B cell (primary cell): ENCODE measurements at regions of chr7 and their contacts with region 1.

Region 1: DNA sequence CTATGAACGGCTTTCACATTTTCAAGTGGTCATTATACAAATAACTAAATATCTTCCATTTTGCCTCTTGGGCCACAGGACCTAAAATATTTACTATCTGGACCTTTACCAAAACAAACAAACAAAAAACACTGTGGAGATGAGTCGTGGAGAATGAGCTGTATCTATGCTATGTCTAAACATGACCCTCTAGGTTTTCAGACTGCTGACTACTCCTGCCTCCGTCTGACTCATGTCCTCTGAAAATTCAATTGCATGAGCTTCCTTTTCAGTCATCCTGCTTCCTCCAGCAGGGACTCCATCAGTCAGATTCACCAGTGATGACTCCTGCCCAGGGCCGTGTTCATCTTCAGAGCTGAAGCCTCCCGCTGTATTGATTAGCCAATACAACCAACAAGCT is 96.8 kb downstream of the COL28A1 start:
- DNase-seq: no peak
- ATAC-seq: no peak
- H3K4me3 ChIP-seq: no peak overlapping the region
- H3K4me3 Mint-ChIP-seq: no peak overlapping the region
- H3K27ac ChIP-seq: no peak overlapping the region
- H3K27ac Mint-ChIP-seq: no peak overlapping the region
- H3K4me1 ChIP-seq: no peaks in the 10 kb centered on the region
- H3K4me1 Mint-ChIP-seq: no peaks in the 10 kb centered on the region
- H3K27me3 ChIP-seq: no peaks in the 10 kb centered on the region
- H3K27me3 Mint-ChIP-seq: peaks cover 11% of the 10 kb centered on the region
- CTCF ChIP-seq: no peak

Region 2: GRCh38 chr7:7489546-7489945 is 50.7 kb after region 1 on chr7:
- CTCF ChIA-PET with region 1: no interaction called
- POLR2A ChIA-PET with region 1: no interaction called
- intact Hi-C with region 1: loop called (anchors 10 kb)
- DNase-seq: no peak
- ATAC-seq: no peak
- H3K4me3 ChIP-seq: no peak overlapping the region
- H3K4me3 Mint-ChIP-seq: peak overlapping the region; percentile 53
- H3K27ac ChIP-seq: no peak overlapping the region
- H3K27ac Mint-ChIP-seq: peak overlapping the region; percentile 12
- H3K4me1 ChIP-seq: peaks cover 19 to 22% of the 10 kb centered on the region in 2 donors
- H3K4me1 Mint-ChIP-seq: peaks cover 33% of the 10 kb centered on the region
- H3K27me3 ChIP-seq: no peaks in the 10 kb centered on the region
- H3K27me3 Mint-ChIP-seq: no peaks in the 10 kb centered on the region
- CTCF ChIP-seq: no peak